Colonic mucosa (tissue), 4 donors: ENCODE measurements at regions of chr5 and their contacts with region 1.

Region 1: GRCh38 chr5:32489791-32490582 is 45.4 kb upstream of the ZFR start:
- DNase-seq: peak; percentile 83
- H3K4me3 ChIP-seq: no peak overlapping the region
- H3K27ac ChIP-seq: no peak overlapping the region
- H3K4me1 ChIP-seq: no peaks in the 10 kb centered on the region
- H3K27me3 ChIP-seq: no peaks in the 10 kb centered on the region
- CTCF ChIP-seq: peak; percentile 64

Region 2: DNA sequence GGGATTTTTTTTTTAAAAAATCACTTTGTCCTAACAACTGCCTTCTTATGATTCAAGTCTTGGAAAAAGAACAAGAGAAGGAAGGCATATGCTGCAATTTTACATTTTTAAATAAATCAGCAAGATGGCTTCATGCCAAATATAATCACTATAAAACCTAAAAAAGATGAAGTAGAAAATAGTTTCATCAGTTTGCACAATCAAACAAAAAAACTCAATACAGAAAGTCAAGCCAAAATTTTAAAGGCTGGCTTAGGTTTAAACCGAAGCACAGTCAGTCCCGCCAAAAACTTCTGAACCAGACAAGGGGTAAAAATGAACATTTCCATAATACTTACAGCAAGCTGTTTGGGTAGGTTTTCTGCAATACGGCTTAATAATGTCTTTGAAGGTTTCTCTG is 102.8 kb before region 1 on chr5:
- intact Hi-C with region 1: no loop called
- DNase-seq: no peak
- H3K4me3 ChIP-seq: no peak overlapping the region
- H3K27ac ChIP-seq: no peak overlapping the region
- H3K4me1 ChIP-seq: no peaks in the 10 kb centered on the region
- H3K27me3 ChIP-seq: no peaks in the 10 kb centered on the region
- CTCF ChIP-seq: no peak

Region 3: GRCh38 chr5:32585446-32586275 is 95.7 kb after region 1 on chr5 and contains the start of gene SUB1:
- intact Hi-C with region 1: loop called (anchors 2 kb)
- DNase-seq: peak; percentile 95
- H3K4me3 ChIP-seq: peak within 1 kb of the TSS; percentile 91
- H3K27ac ChIP-seq: peak within 1 kb of the TSS; percentile 99
- H3K4me1 ChIP-seq: peaks cover 6% of the 10 kb centered on the region
- H3K27me3 ChIP-seq: no peaks in the 10 kb centered on the region
- CTCF ChIP-seq: no peak
- total RNA-seq, gene SUB1: 193 to 227 TPM

Region 4: GRCh38 chr5:32613050-32613672 is 123.2 kb after region 1 on chr5:
- intact Hi-C with region 1: loop called (anchors 2 kb)
- DNase-seq: peak; percentile 90
- H3K4me3 ChIP-seq: no peak overlapping the region
- H3K27ac ChIP-seq: no peak overlapping the region
- H3K4me1 ChIP-seq: no peaks in the 10 kb centered on the region
- H3K27me3 ChIP-seq: no peaks in the 10 kb centered on the region
- CTCF ChIP-seq: peak; percentile 90

Region 5: DNA sequence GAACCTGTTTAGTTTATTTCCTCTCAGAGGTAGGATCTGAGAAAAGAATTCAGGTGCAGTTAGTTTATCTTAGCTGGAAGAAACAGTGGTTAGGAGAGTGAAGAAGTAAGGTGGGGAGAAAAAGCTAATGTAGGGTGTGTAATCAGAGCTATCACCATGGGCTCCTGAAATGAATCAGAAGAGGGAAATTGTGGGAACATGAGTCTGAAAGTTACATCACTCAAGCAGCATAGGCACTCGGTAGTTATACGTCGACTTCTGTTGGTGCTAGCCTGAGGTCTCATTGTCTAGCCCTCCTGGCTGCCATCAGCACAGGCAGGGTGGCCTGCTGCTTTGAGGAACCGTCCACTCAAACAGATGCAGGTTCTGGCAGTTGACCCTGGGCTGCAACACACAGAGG is 164.4 kb after region 1 on chr5:
- intact Hi-C with region 1: no loop called
- DNase-seq: no peak
- H3K4me3 ChIP-seq: no peak overlapping the region
- H3K27ac ChIP-seq: no peak overlapping the region
- H3K4me1 ChIP-seq: no peaks in the 10 kb centered on the region
- H3K27me3 ChIP-seq: no peaks in the 10 kb centered on the region
- CTCF ChIP-seq: no peak